ENCODE measurements at regions of chr16 and their contacts with region 1.

Region 1: GRCh38 chr16:9545522-9546437 is 454.3 kb downstream of the HAPSTR1 start:
- DNase-seq: peak; percentile 80 to 91
- H3K4me3 ChIP-seq: no peak overlapping the region
- H3K4me3 Mint-ChIP-seq: peak overlapping the region; percentile 55
- H3K27ac Mint-ChIP-seq: peak overlapping the region; percentile 94
- H3K4me1 ChIP-seq: peaks cover 24% of the 10 kb centered on the region
- H3K4me1 Mint-ChIP-seq: peaks cover 18% of the 10 kb centered on the region
- H3K27me3 ChIP-seq: no peaks in the 10 kb centered on the region
- H3K27me3 Mint-ChIP-seq: no peaks in the 10 kb centered on the region
- CTCF ChIP-seq: no peak

Region 2: DNA sequence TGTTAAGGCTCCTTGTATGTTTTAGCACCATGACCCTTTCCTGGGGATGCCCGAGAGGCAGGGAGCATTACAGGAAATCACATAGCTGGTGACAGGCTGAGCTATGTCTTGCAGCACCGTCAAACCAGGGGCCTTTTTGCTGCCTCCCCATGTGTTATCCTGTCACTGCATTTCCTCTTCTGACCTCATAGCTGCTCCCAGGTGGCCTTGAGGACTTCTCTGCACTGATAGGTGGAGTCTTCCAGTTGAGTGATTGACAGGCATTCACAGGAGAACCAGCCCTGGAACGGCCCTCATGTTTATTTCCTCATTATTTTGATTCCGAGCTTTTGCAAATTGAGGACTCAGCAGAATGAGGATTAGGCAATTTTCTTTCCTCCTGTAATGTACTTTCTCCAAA is 104.8 kb before region 1 on chr16:
- CTCF ChIA-PET with region 1: no interaction called
- POLR2A ChIA-PET with region 1: no interaction called
- intact Hi-C with region 1: no loop called
- DNase-seq: peak in 1 of 2 experiments; percentile 4
- H3K4me3 ChIP-seq: no peak overlapping the region
- H3K4me3 Mint-ChIP-seq: no peak overlapping the region
- H3K27ac Mint-ChIP-seq: no peak overlapping the region
- H3K4me1 ChIP-seq: no peaks in the 10 kb centered on the region
- H3K4me1 Mint-ChIP-seq: no peaks in the 10 kb centered on the region
- H3K27me3 ChIP-seq: no peaks in the 10 kb centered on the region
- H3K27me3 Mint-ChIP-seq: peaks cover 2% of the 10 kb centered on the region
- CTCF ChIP-seq: no peak

Region 3: DNA sequence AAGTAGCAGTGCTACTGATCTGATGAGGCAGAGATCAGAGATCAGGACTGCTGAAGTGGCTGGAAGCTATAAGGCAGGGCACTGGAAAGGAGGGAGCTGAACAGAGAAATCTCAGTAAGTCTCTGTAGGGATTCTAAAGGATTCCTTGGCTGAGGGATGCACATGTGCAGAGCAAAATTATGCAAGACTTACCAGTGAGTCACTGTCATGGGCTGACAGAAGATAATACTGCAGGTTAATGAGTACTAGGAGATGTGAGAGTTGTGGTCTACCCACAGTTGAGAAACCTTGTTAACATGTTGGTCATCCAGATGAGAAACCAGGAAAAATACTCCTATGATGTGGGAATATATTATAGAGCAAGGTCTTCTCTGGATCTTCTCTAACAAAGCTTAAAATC is 76.3 kb before region 1 on chr16:
- CTCF ChIA-PET with region 1: no interaction called
- POLR2A ChIA-PET with region 1: no interaction called
- intact Hi-C with region 1: loop called (anchors 5 kb)
- DNase-seq: peak; percentile 47 to 57
- H3K4me3 ChIP-seq: no peak overlapping the region
- H3K4me3 Mint-ChIP-seq: peak overlapping the region; percentile 22
- H3K27ac Mint-ChIP-seq: peak overlapping the region; percentile 45
- H3K4me1 ChIP-seq: peaks cover 8% of the 10 kb centered on the region
- H3K4me1 Mint-ChIP-seq: peaks cover 13% of the 10 kb centered on the region
- H3K27me3 ChIP-seq: no peaks in the 10 kb centered on the region
- H3K27me3 Mint-ChIP-seq: no peaks in the 10 kb centered on the region
- CTCF ChIP-seq: no peak

Region 4: GRCh38 chr16:9499941-9500593 is 45.7 kb before region 1 on chr16:
- CTCF ChIA-PET with region 1: no interaction called
- POLR2A ChIA-PET with region 1: no interaction called
- intact Hi-C with region 1: no loop called
- DNase-seq: no peak
- H3K4me3 ChIP-seq: no peak overlapping the region
- H3K4me3 Mint-ChIP-seq: no peak overlapping the region
- H3K27ac Mint-ChIP-seq: no peak overlapping the region
- H3K4me1 ChIP-seq: no peaks in the 10 kb centered on the region
- H3K4me1 Mint-ChIP-seq: peaks cover 16% of the 10 kb centered on the region
- H3K27me3 ChIP-seq: no peaks in the 10 kb centered on the region
- H3K27me3 Mint-ChIP-seq: no peaks in the 10 kb centered on the region
- CTCF ChIP-seq: no peak

Region 5: GRCh38 chr16:9527976-9528375 is 17.8 kb before region 1 on chr16:
- CTCF ChIA-PET with region 1: no interaction called
- POLR2A ChIA-PET with region 1: no interaction called
- intact Hi-C with region 1: loop called (anchors 1 kb)
- DNase-seq: peak in 1 of 2 experiments; percentile 20
- H3K4me3 ChIP-seq: no peak overlapping the region
- H3K4me3 Mint-ChIP-seq: no peak overlapping the region
- H3K27ac Mint-ChIP-seq: no peak overlapping the region
- H3K4me1 ChIP-seq: peaks cover 27% of the 10 kb centered on the region
- H3K4me1 Mint-ChIP-seq: peaks cover 24% of the 10 kb centered on the region
- H3K27me3 ChIP-seq: no peaks in the 10 kb centered on the region
- H3K27me3 Mint-ChIP-seq: no peaks in the 10 kb centered on the region
- CTCF ChIP-seq: no peak

Region 6: GRCh38 chr16:9647981-9648712 is 102.4 kb after region 1 on chr16:
- CTCF ChIA-PET with region 1: no interaction called
- POLR2A ChIA-PET with region 1: no interaction called
- intact Hi-C with region 1: loop called (anchors 10 kb)
- DNase-seq: peak in 1 of 2 experiments; percentile 47
- H3K4me3 ChIP-seq: no peak overlapping the region
- H3K4me3 Mint-ChIP-seq: no peak overlapping the region
- H3K27ac Mint-ChIP-seq: no peak overlapping the region
- H3K4me1 ChIP-seq: no peaks in the 10 kb centered on the region
- H3K4me1 Mint-ChIP-seq: peaks cover 6% of the 10 kb centered on the region
- H3K27me3 ChIP-seq: no peaks in the 10 kb centered on the region
- H3K27me3 Mint-ChIP-seq: peaks cover 5% of the 10 kb centered on the region
- CTCF ChIP-seq: peak; percentile 77

Measured in Caco-2 (cell line).